ENCODE measurements at regions of chr16 and their contacts with region 1.

Region 1: GRCh38 chr16:5045499-5046115 is 11.9 kb upstream of the NAGPA start:
- DNase-seq: no peak
- H3K4me3 ChIP-seq: no peak overlapping the region
- H3K27ac ChIP-seq: no peak overlapping the region
- H3K4me1 ChIP-seq: no peaks in the 10 kb centered on the region
- H3K27me3 ChIP-seq: peaks cover 0 to 2% (median 0%) of the 10 kb centered on the region in 5 experiments

Region 2: GRCh38 chr16:4869147-4869805 is 176.3 kb before region 1 on chr16:
- CTCF ChIA-PET with region 1: no interaction called
- POLR2A ChIA-PET with region 1: no interaction called
- DNase-seq: no peak
- H3K4me3 ChIP-seq: no peak overlapping the region
- H3K27ac ChIP-seq: no peak overlapping the region
- H3K4me1 ChIP-seq: no peaks in the 10 kb centered on the region
- H3K27me3 ChIP-seq: no peaks in the 10 kb centered on the region

Region 3: GRCh38 chr16:5056352-5056751 is 10.7 kb after region 1 on chr16:
- CTCF ChIA-PET with region 1: interaction called, 11 read pairs
- POLR2A ChIA-PET with region 1: no interaction called
- DNase-seq: peak; percentile 58 to 73 (median 70)
- H3K4me3 ChIP-seq: no peak overlapping the region
- H3K27ac ChIP-seq: no peak overlapping the region
- H3K4me1 ChIP-seq: peaks cover 0 to 5% (median under 1%) of the 10 kb centered on the region in 4 experiments
- H3K27me3 ChIP-seq: no peaks in the 10 kb centered on the region

Region 4: GRCh38 chr16:5222761-5223160 is 177.2 kb after region 1 on chr16:
- CTCF ChIA-PET with region 1: no interaction called
- POLR2A ChIA-PET with region 1: interaction called, 10 read pairs
- DNase-seq: no peak
- H3K4me3 ChIP-seq: no peak overlapping the region
- H3K27ac ChIP-seq: no peak overlapping the region
- H3K4me1 ChIP-seq: no peaks in the 10 kb centered on the region
- H3K27me3 ChIP-seq: peaks cover 0 to 18% (median 0%) of the 10 kb centered on the region in 5 experiments

Measured in common myeloid progenitor, CD34-positive (primary cell).